ENCODE measurements at regions of chr10 and their contacts with region 1.

Region 1: DNA sequence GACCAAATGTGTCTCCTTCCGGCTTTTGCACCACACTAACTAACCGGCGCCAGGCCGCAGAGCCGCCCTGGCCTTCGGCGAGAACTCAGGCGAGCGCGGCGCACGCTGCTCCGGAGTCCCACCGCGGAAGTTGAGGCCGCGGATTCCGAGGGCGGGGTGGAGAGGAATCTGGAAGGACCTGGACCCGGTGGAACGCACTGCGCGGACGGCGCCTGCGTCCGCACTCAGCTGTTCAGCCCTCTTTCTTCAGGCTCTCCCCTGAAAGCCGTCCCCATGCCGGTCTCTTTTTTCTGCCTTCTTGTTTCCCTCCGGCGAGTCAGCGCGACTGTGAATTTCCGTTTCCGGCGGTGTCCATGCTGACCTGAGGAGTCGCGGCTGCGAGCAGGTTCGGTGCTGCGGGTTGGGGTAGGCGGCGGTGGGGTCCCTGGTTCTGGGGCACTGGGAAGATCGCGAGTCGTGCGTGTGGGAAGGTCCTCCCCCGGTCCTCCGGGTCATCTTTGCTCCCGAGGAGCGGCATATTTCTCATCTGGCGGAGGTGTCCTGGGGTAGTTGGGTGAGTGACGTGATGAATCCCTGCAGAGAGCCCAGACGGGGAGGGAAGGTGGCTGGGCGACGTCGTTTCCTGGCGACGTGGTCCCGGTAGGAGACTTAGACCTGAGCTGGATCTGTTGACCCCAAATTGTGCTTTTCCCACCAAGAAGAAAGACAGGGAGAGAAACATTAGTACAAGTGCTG is at the start of gene BMS1:
- DNase-seq: peak; percentile 90
- ATAC-seq: peak; percentile 93
- H3K4me3 ChIP-seq: peak within 1 kb of the TSS; percentile 69 to 90 (median 84)
- H3K27ac ChIP-seq: peak within 1 kb of the TSS; percentile 89
- H3K4me1 ChIP-seq: peaks cover 21% of the 10 kb centered on the region
- H3K27me3 ChIP-seq: no peaks in the 10 kb centered on the region; a peak in 1 of 5 replicates
- CTCF ChIP-seq: no peak
- EP300 ChIP-seq: peak in 1 of 2 experiments; percentile 46; a peak in 1 of 4 replicates
- POLR2A ChIP-seq: peak; percentile 87
- RAD21 ChIP-seq: 0 out of 2 replicates have a peak, but pooled peaks have one; percentile 24
- total RNA-seq, gene BMS1: 25.2 and 41.1 TPM in 2 replicates

Region 2: GRCh38 chr10:42552493-42553407 is 229.9 kb before region 1 on chr10:
- CTCF ChIA-PET with region 1: no interaction called
- POLR2A ChIA-PET with region 1: no interaction called
- in situ Hi-C with region 1: no loop called
- intact Hi-C with region 1: loop called (anchors 5 kb)
- DNase-seq: peak; percentile 96
- ATAC-seq: peak; percentile 90
- H3K4me3 ChIP-seq: peak overlapping the region; percentile 73 to 92 (median 83)
- H3K27ac ChIP-seq: peak overlapping the region; percentile 62
- H3K4me1 ChIP-seq: peaks cover 73% of the 10 kb centered on the region
- H3K27me3 ChIP-seq: no peaks in the 10 kb centered on the region; a peak in 1 of 5 replicates
- CTCF ChIP-seq: no peak
- EP300 ChIP-seq: 0 out of 4 replicates have a peak, but pooled peaks of 1 of the 2 experiments have one; percentile 4
- POLR2A ChIP-seq: peak; percentile 37 to 62; a peak in 3 of 4 replicates
- RAD21 ChIP-seq: no peak

Region 3: DNA sequence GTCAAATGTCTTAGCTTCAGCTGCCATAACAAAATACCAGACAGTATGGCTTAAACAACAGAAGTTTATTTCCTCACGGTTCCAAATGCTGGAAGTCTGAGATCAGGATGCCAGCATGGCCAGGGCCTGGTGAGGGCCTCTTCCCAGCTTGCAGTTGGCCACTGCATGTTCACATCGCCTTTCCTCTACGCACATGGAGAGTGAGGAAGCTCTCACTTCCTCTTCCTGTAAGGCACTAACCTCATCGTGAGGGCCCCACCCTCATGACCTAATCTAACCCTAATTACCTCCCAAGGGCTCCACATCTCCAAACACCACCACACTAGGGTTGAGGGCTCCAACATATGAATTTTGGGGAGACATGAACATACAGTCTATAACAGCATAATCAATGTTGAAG is 158.7 kb before region 1 on chr10:
- CTCF ChIA-PET with region 1: no interaction called
- POLR2A ChIA-PET with region 1: no interaction called
- in situ Hi-C with region 1: no loop called
- intact Hi-C with region 1: no loop called
- DNase-seq: no peak
- ATAC-seq: no peak
- H3K4me3 ChIP-seq: no peak overlapping the region
- H3K27ac ChIP-seq: no peak overlapping the region
- H3K4me1 ChIP-seq: no peaks in the 10 kb centered on the region
- H3K27me3 ChIP-seq: no peaks in the 10 kb centered on the region
- CTCF ChIP-seq: no peak
- EP300 ChIP-seq: no peak
- POLR2A ChIP-seq: no peak
- RAD21 ChIP-seq: no peak

Region 4: GRCh38 chr10:42638055-42638820 is 144.4 kb before region 1 on chr10 and contains the start of gene ZNF33B:
- CTCF ChIA-PET with region 1: no interaction called
- POLR2A ChIA-PET with region 1: interaction called, 5 read pairs
- in situ Hi-C with region 1: no loop called
- intact Hi-C with region 1: loop called (anchors 1 kb)
- DNase-seq: peak; percentile 94
- ATAC-seq: peak; percentile 96
- H3K4me3 ChIP-seq: peak within 1 kb of the TSS; percentile 50 to 78 (median 68)
- H3K27ac ChIP-seq: peak within 1 kb of the TSS; percentile 93
- H3K4me1 ChIP-seq: peaks cover 56% of the 10 kb centered on the region
- H3K27me3 ChIP-seq: no peaks in the 10 kb centered on the region
- CTCF ChIP-seq: no peak
- EP300 ChIP-seq: no peak
- POLR2A ChIP-seq: peak; percentile 92 to 94
- RAD21 ChIP-seq: no peak; the same call in 1 of the 2 replicates
- total RNA-seq, gene ZNF33B: 23.5 and 32.9 TPM in 2 replicates

Region 5: DNA sequence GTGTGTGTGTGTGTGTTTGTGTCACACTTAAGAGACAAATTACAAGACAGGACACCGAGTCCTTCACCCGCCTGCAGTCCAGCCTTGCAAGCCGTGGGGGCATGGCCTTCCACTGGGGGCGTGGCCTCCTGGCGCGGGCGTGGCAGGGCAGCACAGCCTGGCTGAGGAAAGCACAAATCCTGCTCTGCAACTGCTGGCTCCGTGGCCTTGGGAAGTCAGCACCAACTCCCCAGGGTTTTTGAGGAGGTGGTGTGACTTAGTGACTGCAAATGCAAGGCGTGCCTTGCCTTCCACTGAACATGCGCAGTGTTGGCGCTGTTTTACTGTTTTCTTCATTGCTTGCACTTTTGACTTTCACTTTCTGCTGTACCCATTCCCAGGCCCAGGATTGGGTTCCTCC is 13.0 kb before region 1 on chr10:
- CTCF ChIA-PET with region 1: no interaction called
- POLR2A ChIA-PET with region 1: interaction called, 13 read pairs
- in situ Hi-C with region 1: no loop called
- intact Hi-C with region 1: no loop called
- DNase-seq: no peak
- ATAC-seq: peak; percentile 73
- H3K4me3 ChIP-seq: peak overlapping the region; percentile 1 to 51 (median 21); a peak in 4 of 6 replicates
- H3K27ac ChIP-seq: no peak overlapping the region
- H3K4me1 ChIP-seq: peaks cover 12% of the 10 kb centered on the region
- H3K27me3 ChIP-seq: peaks cover 0 to 6% of the 10 kb centered on the region in 2 experiments; a peak in 1 of 5 replicates
- CTCF ChIP-seq: no peak
- EP300 ChIP-seq: no peak
- POLR2A ChIP-seq: no peak
- RAD21 ChIP-seq: no peak

Region 6: DNA sequence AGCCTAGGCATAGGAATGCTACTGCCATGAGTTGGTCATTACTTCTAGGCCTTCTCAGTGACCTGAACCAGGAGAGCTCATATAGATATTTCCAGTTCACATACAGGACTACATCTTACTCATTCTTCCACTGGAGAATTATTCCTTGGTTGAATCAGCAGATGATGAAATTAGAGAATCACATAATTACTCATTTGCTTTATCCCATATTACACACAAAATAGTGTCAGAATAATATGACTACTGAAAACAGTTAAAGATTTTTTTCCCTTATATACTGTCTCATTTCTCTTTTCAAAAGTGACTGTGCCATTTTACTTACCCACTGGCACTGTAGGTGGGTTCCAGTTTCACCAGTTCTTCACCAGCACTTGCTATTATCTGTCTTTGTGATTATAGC is 18.5 kb after region 1 on chr10:
- CTCF ChIA-PET with region 1: no interaction called
- POLR2A ChIA-PET with region 1: interaction called, 3 read pairs
- in situ Hi-C with region 1: no loop called
- intact Hi-C with region 1: loop called (anchors 2 kb)
- DNase-seq: no peak
- ATAC-seq: no peak
- H3K4me3 ChIP-seq: no peak overlapping the region
- H3K27ac ChIP-seq: no peak overlapping the region
- H3K4me1 ChIP-seq: no peaks in the 10 kb centered on the region
- H3K27me3 ChIP-seq: no peaks in the 10 kb centered on the region
- CTCF ChIP-seq: no peak
- EP300 ChIP-seq: no peak
- POLR2A ChIP-seq: no peak
- RAD21 ChIP-seq: no peak